ENCODE measurements at regions of chr4 and their contacts with region 1.

Region 1: GRCh38 chr4:148565801-148566200 is 123.6 kb upstream of the NR3C2 start:
- DNase-seq: no peak
- ATAC-seq: no peak
- H3K4me3 Mint-ChIP-seq: no peak overlapping the region
- H3K27ac Mint-ChIP-seq: peak overlapping the region; percentile 30; the same call in 1 of the 2 replicates
- H3K4me1 Mint-ChIP-seq: no peaks in the 10 kb centered on the region
- H3K27me3 Mint-ChIP-seq: no peaks in the 10 kb centered on the region; the same call in 1 of the 2 replicates
- CTCF ChIP-seq: no peak

Region 2: GRCh38 chr4:148380291-148380690 is 185.5 kb before region 1 on chr4:
- CTCF ChIA-PET with region 1: no interaction called
- POLR2A ChIA-PET with region 1: interaction called, 11 read pairs
- DNase-seq: no peak
- ATAC-seq: no peak
- H3K4me3 Mint-ChIP-seq: no peak overlapping the region
- H3K27ac Mint-ChIP-seq: no peak overlapping the region
- H3K4me1 Mint-ChIP-seq: no peaks in the 10 kb centered on the region
- H3K27me3 Mint-ChIP-seq: no peaks in the 10 kb centered on the region
- CTCF ChIP-seq: no peak

Measured in WTC11 (cell line).